ENCODE measurements at regions of chr19 and their contacts with region 1.

Region 1: GRCh38 chr19:56066152-56067023 is 54.7 kb downstream of the ZNF787 start:
- DNase-seq: peak; percentile 54
- H3K4me3 ChIP-seq: peak overlapping the region in 2 of 3 experiments; percentile 20 to 32
- H3K27ac ChIP-seq: no peak overlapping the region
- H3K4me1 ChIP-seq: peaks cover 7% of the 10 kb centered on the region
- H3K27me3 ChIP-seq: no peaks in the 10 kb centered on the region
- CTCF ChIP-seq: peak; percentile 91 to 95
- POLR2A ChIP-seq: no peak

Region 2: GRCh38 chr19:56015756-56016155 is 50.6 kb before region 1 on chr19:
- CTCF ChIA-PET with region 1: no interaction called
- POLR2A ChIA-PET with region 1: no interaction called
- dilution Hi-C with region 1: no loop called
- intact Hi-C with region 1: no loop called
- DNase-seq: no peak
- H3K4me3 ChIP-seq: no peak overlapping the region
- H3K27ac ChIP-seq: no peak overlapping the region
- H3K4me1 ChIP-seq: no peaks in the 10 kb centered on the region
- H3K27me3 ChIP-seq: no peaks in the 10 kb centered on the region
- CTCF ChIP-seq: no peak
- POLR2A ChIP-seq: no peak

Region 3: GRCh38 chr19:56350416-56351045 is 284.1 kb after region 1 on chr19:
- CTCF ChIA-PET with region 1: interaction called, 32 read pairs
- POLR2A ChIA-PET with region 1: no interaction called
- dilution Hi-C with region 1: no loop called
- intact Hi-C with region 1: no loop called
- DNase-seq: peak; percentile 55
- H3K4me3 ChIP-seq: no peak overlapping the region
- H3K27ac ChIP-seq: no peak overlapping the region
- H3K4me1 ChIP-seq: no peaks in the 10 kb centered on the region
- H3K27me3 ChIP-seq: no peaks in the 10 kb centered on the region
- CTCF ChIP-seq: peak; percentile 56 to 75
- POLR2A ChIP-seq: no peak

Measured in endothelial cell of umbilical vein (primary cell).